ENCODE measurements at regions of chr6 and their contacts with region 1.

Region 1: DNA sequence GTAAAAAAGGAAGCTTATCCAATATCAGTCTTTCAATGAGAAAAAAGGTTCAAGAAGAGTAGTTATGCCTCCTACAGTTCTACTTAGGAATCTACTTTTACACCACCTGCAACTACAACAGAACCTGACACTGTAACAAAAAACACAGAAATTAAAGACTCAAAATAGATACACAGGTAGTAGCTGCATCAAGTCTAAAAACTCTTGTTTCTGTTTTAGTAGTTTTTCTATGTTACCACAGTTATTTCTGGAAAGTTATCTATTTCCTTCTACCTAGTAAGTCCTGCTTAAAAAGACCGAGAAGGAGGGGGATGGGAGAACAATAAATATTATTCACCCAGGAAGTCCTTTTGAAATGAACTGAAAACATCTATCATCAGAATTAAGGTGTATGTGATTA is 52.5 kb downstream of the ATG5 start:
- DNase-seq: no peak
- H3K4me3 Mint-ChIP-seq: no peak overlapping the region
- H3K27ac Mint-ChIP-seq: no peak overlapping the region
- H3K4me1 Mint-ChIP-seq: peaks cover 9% of the 10 kb centered on the region
- H3K27me3 Mint-ChIP-seq: no peaks in the 10 kb centered on the region

Region 2: GRCh38 chr6:106237286-106237685 is 35.8 kb before region 1 on chr6:
- intact Hi-C with region 1: loop called (anchors 5 kb)
- DNase-seq: no peak
- H3K4me3 Mint-ChIP-seq: no peak overlapping the region
- H3K27ac Mint-ChIP-seq: no peak overlapping the region
- H3K4me1 Mint-ChIP-seq: no peaks in the 10 kb centered on the region
- H3K27me3 Mint-ChIP-seq: no peaks in the 10 kb centered on the region

Measured in activated T-helper 1 cell treated with anti-CD3 and anti-CD28 coated beads, Interleukin-12 subunit alpha, Interleukin-12 subunit beta, Interleukin-2, Interleukin-4 antibody, amounts not matched to agents 30 ng/mL and 10 ng/mL and 1 ng/mL, durations not matched to agents 14 hours and 24 hours and 36 hours (primary cell).